ENCODE measurements at regions of chr7 and their contacts with region 1.

Region 1: GRCh38 chr7:50317221-50317678 is 12.7 kb downstream of the IKZF1 start:
- DNase-seq: no peak
- H3K4me3 ChIP-seq: no peak overlapping the region
- H3K4me3 Mint-ChIP-seq: no peak overlapping the region
- H3K27ac ChIP-seq: peak overlapping the region in 1 of 2 donors; percentile 79
- H3K27ac Mint-ChIP-seq: peak overlapping the region in 4 of 7 donors; percentile 73 to 89 (median 80)
- H3K4me1 ChIP-seq: peaks cover 67 to 83% of the 10 kb centered on the region in 2 donors
- H3K4me1 Mint-ChIP-seq: peaks cover 92% of the 10 kb centered on the region
- H3K27me3 ChIP-seq: no peaks in the 10 kb centered on the region
- H3K27me3 Mint-ChIP-seq: peaks cover 0 to 1% (median 0%) of the 10 kb centered on the region in 3 donors
- CTCF ChIP-seq: no peak

Region 2: DNA sequence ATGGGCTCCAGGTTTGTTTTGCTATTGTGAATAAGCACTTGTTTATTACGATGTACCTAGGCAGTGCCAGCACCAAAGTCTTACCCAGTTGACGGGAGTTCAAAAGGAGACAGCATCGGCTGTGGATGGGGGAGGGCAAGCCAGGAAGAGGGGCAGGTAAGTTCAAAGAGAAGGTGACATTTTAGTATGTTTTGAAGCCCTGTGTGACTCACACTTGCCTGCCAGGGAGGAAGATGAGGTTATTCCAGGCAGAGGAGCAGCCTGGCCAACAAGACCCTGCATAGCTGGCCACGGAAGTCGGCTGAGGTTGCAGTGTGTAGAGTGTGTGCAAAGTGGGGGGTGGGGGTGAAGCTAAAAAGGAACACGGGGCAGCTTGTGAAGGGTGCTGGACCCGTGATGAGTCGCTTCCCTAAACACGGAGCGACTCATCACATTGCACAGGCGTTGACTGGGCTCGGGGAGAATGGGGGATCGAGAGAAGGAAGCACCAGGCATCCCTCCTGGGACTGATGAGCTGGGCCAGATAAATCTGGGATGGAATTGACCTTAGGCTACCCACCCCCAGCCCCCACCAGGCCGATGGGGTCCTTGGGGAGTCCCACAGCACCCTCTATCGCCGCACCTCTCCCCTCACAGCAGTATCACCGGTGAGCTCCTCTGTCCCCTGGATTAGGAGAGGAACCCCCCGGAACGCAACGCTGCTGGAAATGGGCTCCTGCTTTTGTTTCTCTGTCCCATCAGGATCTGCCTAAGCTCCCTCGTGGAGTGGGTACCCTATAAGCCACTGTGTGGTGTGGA is 110.6 kb before region 1 on chr7:
- intact Hi-C with region 1: loop called in 1 of 2 experiments (anchors 5 kb)
- DNase-seq: peak; percentile 74 to 82 (median 76)
- H3K4me3 ChIP-seq: peak overlapping the region in 1 of 3 experiments; percentile 54
- H3K4me3 Mint-ChIP-seq: peak overlapping the region; percentile 63 to 67
- H3K27ac ChIP-seq: peak overlapping the region; percentile 43 to 73
- H3K27ac Mint-ChIP-seq: peak overlapping the region; percentile 84 to 94 (median 92)
- H3K4me1 ChIP-seq: peaks cover 40 to 41% of the 10 kb centered on the region in 2 donors
- H3K4me1 Mint-ChIP-seq: peaks cover 53% of the 10 kb centered on the region
- H3K27me3 ChIP-seq: no peaks in the 10 kb centered on the region
- H3K27me3 Mint-ChIP-seq: peaks cover 0 to 11% (median 0%) of the 10 kb centered on the region in 3 donors
- CTCF ChIP-seq: no peak

Region 3: GRCh38 chr7:50262916-50263690 is 54.1 kb before region 1 on chr7:
- intact Hi-C with region 1: no loop called
- DNase-seq: peak in 2 of 3 donors; percentile 71 to 83
- H3K4me3 ChIP-seq: no peak overlapping the region
- H3K4me3 Mint-ChIP-seq: no peak overlapping the region
- H3K27ac ChIP-seq: no peak overlapping the region
- H3K27ac Mint-ChIP-seq: peak overlapping the region in 6 of 7 donors; percentile 1 to 60 (median 37)
- H3K4me1 ChIP-seq: peaks cover 57 to 61% of the 10 kb centered on the region in 2 donors
- H3K4me1 Mint-ChIP-seq: peaks cover 64% of the 10 kb centered on the region
- H3K27me3 ChIP-seq: no peaks in the 10 kb centered on the region
- H3K27me3 Mint-ChIP-seq: peaks cover 0 to 2% (median 0%) of the 10 kb centered on the region in 3 donors
- CTCF ChIP-seq: no peak

Region 4: DNA sequence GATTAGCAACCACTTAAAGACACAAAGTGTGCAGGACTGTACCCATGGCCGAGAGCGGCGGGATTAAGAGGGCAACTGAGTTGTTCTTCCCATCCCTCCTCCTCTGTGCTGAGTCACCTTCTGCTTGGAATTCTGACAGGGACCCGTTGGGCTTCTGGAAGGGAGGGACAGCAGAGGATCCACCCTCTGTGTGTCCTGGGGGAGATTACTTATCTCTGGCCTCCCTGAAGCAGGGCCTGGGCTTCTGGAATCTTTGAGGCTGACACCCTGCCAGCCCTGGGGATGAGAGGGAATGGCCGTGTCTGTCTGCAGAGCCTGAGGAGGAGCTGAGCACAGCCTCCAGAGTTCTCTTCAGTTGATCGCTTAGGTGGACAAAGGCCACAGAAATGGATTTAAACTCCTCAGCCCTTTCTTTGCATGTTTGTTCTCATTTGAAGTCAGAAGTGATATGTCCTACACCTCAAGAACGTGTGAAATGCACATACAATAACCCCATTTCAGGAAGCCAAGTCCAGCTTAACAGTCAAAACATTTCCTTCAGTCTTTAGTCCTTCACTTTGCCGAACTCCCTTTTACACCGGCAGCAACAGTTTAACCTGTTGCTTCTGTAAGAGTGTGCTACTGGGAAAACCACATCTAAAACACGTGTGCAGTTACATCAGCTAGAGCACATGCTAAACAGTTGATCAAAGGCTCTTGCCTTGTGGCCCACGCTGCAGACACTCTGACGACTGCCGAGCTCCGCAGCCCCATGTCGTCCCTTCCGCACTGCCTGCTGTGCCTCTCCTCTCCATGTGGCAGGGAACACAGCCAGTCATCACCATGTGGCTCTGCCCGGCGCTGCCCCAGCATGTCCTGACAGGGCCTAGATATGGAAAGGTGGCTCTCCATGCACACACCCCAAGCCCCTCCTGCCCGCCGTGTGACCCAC is 43.0 kb after region 1 on chr7:
- intact Hi-C with region 1: loop called in 1 of 2 experiments (anchors 5 kb)
- DNase-seq: no peak
- H3K4me3 ChIP-seq: no peak overlapping the region
- H3K4me3 Mint-ChIP-seq: no peak overlapping the region
- H3K27ac ChIP-seq: peak overlapping the region in 1 of 2 donors; percentile 72
- H3K27ac Mint-ChIP-seq: peak overlapping the region in 6 of 7 donors; percentile 27 to 82 (median 52)
- H3K4me1 ChIP-seq: peaks cover 47 to 63% of the 10 kb centered on the region in 2 donors
- H3K4me1 Mint-ChIP-seq: peaks cover 78% of the 10 kb centered on the region
- H3K27me3 ChIP-seq: no peaks in the 10 kb centered on the region
- H3K27me3 Mint-ChIP-seq: no peaks in the 10 kb centered on the region
- CTCF ChIP-seq: no peak

Measured in CD14-positive monocyte (primary cell).